ENCODE measurements at regions of chr10 and their contacts with region 1.

Region 1: DNA sequence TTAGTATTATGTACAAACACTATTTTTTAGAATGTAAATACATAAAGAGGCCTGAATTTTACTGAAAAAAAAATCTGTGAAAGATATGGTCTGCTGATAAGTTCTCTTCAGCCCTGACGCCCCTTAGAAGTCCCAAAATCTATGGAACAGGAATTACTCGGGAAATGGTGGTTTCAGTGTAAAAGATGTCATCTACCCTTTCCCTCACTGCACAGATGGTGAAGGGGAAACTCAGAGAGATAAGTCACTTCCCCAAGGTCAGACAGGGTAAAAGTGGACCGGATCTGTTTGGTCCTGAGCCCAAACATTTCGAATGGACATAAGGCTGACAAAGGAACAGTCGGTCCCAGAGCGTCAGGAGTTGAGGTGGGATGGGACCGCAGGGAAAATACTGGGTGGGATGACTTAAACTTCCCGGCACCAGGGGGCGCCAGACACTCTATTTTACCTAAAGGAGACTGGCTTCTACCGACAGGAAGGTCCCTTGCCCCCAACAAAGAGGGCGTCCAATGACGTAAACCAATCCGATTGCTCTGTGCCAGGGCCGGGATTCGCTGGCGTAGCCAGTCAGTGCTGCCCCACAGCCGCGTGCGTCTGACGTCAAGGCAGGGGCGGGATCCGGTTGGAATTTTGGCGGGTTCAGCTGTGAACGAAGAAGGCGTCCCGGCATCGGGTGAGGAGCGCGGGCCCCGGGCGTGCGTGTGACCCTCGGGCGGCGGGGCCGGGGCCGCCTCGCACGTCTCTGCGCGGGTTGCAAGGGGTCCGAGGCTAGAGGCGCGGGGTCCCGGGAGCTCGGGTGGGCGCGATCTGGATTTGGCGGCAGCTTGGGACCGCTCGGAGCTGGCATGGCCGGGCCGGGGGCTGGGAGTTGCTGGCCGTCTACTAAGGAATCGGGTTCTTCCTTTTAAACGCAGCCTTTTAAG is at the start of gene MCM10:
- ATAC-seq: peak; percentile 100
- H3K4me3 ChIP-seq: peak within 1 kb of the TSS; percentile 42 to 64 (median 56)
- H3K27ac ChIP-seq: no peak within 1 kb of the TSS
- H3K4me1 ChIP-seq: no peaks in the 10 kb centered on the region
- total RNA-seq, gene MCM10: 0.31 to 21.1 (median 1.1) TPM

Region 2: GRCh38 chr10:12902135-12902572 is 259.0 kb before region 1 on chr10:
- in situ Hi-C with region 1: no loop called
- ATAC-seq: peak in 7 of 8 experiments; percentile 35 to 71 (median 59)
- H3K4me3 ChIP-seq: no peak overlapping the region
- H3K27ac ChIP-seq: no peak overlapping the region
- H3K4me1 ChIP-seq: no peaks in the 10 kb centered on the region

Region 3: GRCh38 chr10:13299437-13300287 is 138.5 kb after region 1 on chr10 and contains the start of gene PHYH:
- in situ Hi-C with region 1: loop called in 3 of 9 experiments (anchors 10 to 25 kb)
- ATAC-seq: peak; percentile 70 to 87 (median 84)
- H3K4me3 ChIP-seq: peak within 1 kb of the TSS; percentile 39 to 60 (median 44)
- H3K27ac ChIP-seq: peak within 1 kb of the TSS; percentile 86 to 97
- H3K4me1 ChIP-seq: peaks cover 6 to 21% of the 10 kb centered on the region in 2 donors
- total RNA-seq, gene PHYH: 8.8 to 26.4 (median 19.3) TPM

Measured in motor neuron (in vitro differentiated cells).